ENCODE measurements at regions of chr2 and their contacts with region 1.

Region 1: GRCh38 chr2:217785544-217786045 is 217.2 kb downstream of the TNS1 start:
- DNase-seq: peak; percentile 87
- ATAC-seq: peak; percentile 87
- H3K4me3 Mint-ChIP-seq: no peak overlapping the region
- H3K27ac Mint-ChIP-seq: no peak overlapping the region
- H3K4me1 Mint-ChIP-seq: peaks cover 13% of the 10 kb centered on the region
- H3K27me3 Mint-ChIP-seq: peaks cover 15% of the 10 kb centered on the region
- CTCF ChIP-seq: peak; percentile 97

Region 2: DNA sequence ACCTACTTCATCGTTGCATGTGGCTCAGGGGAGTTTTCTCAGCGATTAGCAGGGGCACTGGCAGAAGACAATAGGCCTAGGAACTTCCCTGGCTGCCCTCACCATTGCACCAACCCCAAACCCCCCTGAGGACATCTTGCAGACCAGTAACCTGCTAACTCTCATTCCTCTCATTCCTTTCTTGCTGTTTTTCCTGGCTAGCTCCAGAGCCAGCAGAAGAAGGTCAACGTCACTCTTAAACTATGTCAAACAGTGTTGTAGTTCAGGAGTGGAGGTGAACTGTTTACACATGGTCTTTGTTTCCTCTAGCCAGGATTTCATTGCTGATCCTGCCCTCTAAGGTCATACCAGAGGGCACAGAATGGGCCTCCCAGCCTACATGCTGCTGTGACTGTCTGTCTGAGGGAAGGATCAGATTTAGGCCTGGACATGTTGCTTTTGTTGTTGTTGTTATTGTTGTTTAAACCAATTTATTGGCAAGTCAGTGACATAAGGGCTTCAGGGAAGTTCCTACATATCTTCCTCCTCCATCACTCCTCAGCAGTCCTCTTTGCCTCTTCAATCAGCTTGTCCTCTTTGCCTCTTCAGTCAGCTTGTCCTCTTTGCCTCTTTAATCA is 454.0 kb before region 1 on chr2:
- CTCF ChIA-PET with region 1: no interaction called
- POLR2A ChIA-PET with region 1: no interaction called
- DNase-seq: no peak
- ATAC-seq: peak; percentile 70
- H3K4me3 Mint-ChIP-seq: no peak overlapping the region
- H3K27ac Mint-ChIP-seq: no peak overlapping the region
- H3K4me1 Mint-ChIP-seq: peaks cover 47% of the 10 kb centered on the region
- H3K27me3 Mint-ChIP-seq: peaks cover 30% of the 10 kb centered on the region
- CTCF ChIP-seq: no peak

Region 3: GRCh38 chr2:217732992-217733391 is 52.6 kb before region 1 on chr2:
- CTCF ChIA-PET with region 1: no interaction called
- POLR2A ChIA-PET with region 1: no interaction called
- DNase-seq: no peak
- ATAC-seq: no peak
- H3K4me3 Mint-ChIP-seq: no peak overlapping the region
- H3K27ac Mint-ChIP-seq: no peak overlapping the region
- H3K4me1 Mint-ChIP-seq: peaks cover 12% of the 10 kb centered on the region; the same call in 1 of the 2 replicates
- H3K27me3 Mint-ChIP-seq: no peaks in the 10 kb centered on the region
- CTCF ChIP-seq: no peak

Region 4: DNA sequence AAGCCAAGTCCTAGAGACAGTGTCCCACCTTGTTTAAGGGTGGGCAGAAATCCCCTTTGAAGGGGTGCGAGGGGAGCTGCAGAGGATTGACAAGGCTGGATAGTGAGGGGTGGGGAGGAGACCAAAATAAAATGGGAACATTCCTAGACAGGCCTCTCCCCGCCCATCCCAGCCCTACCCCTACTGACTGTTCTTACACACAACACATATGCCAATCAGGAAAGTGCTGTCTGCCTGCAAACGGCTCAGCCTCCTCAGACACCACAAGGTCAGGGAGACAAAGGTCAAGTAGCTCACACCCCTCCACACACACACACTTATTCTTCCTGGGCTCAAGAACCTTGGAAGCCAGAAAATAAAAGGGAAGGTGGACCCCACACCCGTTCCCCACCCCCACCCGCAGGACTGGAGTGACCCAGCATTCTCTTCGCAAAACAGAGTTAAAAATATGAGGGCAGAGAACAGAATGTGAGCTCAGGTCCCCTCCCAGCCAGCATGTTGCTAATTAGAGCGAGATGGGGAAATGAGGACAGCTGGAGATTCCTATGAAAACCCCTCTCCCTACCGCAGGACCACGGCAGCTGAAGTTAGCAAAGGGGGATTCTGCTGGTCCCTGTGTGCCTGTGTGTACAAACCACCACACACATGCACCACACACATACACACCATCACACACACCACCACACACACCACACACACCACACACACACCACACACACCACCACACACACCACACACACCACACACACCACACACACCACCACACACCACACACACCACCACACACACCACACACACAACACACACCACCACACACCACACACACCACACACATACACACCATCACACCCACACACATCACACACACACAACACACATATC is 19.4 kb after region 1 on chr2:
- CTCF ChIA-PET with region 1: interaction called, 17 read pairs
- POLR2A ChIA-PET with region 1: no interaction called
- DNase-seq: no peak
- ATAC-seq: peak; percentile 47
- H3K4me3 Mint-ChIP-seq: no peak overlapping the region
- H3K27ac Mint-ChIP-seq: no peak overlapping the region
- H3K4me1 Mint-ChIP-seq: peaks cover 3% of the 10 kb centered on the region
- H3K27me3 Mint-ChIP-seq: no peaks in the 10 kb centered on the region
- CTCF ChIP-seq: no peak

Region 5: GRCh38 chr2:217880287-217880889 is 94.8 kb after region 1 on chr2:
- CTCF ChIA-PET with region 1: interaction called, 83 read pairs
- POLR2A ChIA-PET with region 1: no interaction called
- DNase-seq: no peak
- ATAC-seq: no peak; the same call in 1 of the 2 replicates
- H3K4me3 Mint-ChIP-seq: no peak overlapping the region
- H3K27ac Mint-ChIP-seq: no peak overlapping the region; the same call in 1 of the 2 replicates
- H3K4me1 Mint-ChIP-seq: peaks cover 13% of the 10 kb centered on the region
- H3K27me3 Mint-ChIP-seq: no peaks in the 10 kb centered on the region
- CTCF ChIP-seq: no peak

Region 6: DNA sequence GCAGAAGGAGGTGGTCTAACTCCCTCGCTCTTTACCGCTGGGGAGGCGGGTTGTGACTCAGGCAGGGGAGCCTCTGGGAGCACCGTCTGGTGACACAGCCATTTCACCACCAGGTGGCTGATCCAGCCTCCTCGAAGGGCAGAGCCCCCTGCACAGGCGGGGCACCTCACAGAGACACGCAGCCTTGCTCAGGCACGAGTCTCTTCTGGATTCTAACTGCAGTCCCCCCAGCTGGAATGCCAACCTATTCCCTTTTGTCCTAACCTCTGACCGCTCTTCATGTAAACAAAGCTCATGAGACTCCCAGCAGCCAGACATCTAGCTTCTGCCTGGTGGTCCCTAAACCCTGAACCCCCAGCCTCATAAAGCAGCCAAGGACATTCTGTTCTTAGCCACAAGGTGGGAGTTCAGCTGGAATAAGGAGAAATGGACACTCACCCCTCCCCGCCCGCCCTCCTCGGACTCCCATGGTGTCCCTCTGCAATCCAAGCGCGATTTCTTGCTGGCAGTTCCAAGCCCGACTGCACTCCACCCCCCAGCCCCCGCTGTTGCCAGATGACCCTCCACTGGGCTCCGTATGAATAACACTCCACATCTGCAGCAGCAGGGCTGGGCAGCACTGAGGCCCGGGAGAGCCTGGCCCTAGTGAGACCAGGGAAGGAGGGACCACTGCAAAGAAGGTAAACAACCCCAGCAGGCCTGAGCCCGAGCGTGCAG is 132.9 kb after region 1 on chr2:
- CTCF ChIA-PET with region 1: interaction called, 14 read pairs
- POLR2A ChIA-PET with region 1: no interaction called
- DNase-seq: peak; percentile 60
- ATAC-seq: peak; percentile 67
- H3K4me3 Mint-ChIP-seq: no peak overlapping the region
- H3K27ac Mint-ChIP-seq: no peak overlapping the region
- H3K4me1 Mint-ChIP-seq: peaks cover 55% of the 10 kb centered on the region
- H3K27me3 Mint-ChIP-seq: no peaks in the 10 kb centered on the region
- CTCF ChIP-seq: no peak

Region 7: DNA sequence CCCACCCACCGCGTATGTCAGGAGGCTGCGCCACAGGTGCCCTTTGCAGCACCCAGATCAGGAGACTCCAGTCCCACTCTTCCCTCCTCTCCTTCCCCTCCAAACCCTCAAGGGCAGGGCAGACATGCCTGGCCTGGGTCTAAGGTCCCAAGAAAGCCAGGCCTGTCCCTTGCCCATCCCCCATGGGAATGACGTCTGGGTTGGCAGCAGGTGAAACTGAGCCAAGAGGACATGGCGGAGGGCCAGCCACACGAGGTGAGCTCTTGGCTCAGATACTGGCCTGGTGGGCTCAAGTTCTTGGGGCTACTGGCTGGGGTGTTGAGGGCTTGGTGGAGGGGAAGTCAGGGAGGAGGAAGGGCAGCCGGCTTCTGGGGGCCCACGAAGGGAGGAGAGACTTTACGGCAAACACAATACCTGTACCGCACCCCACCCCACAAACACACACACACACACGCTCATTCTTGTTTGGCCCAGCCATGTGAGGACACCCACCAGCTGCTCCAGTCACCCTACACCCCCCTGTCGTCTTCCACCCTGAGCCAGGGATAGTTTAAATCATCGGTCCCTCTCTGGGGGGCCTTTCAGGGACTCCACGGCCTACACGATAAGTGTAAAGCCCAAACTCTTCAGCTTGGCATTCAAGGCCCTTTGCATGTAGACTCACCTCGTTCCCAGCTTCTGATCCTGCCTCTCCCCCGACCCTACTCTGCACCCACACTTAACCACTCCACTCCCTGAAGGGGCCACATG is 241.3 kb after region 1 on chr2:
- CTCF ChIA-PET with region 1: interaction called, 12 read pairs
- POLR2A ChIA-PET with region 1: no interaction called
- DNase-seq: peak; percentile 8
- ATAC-seq: no peak
- H3K4me3 Mint-ChIP-seq: no peak overlapping the region
- H3K27ac Mint-ChIP-seq: no peak overlapping the region
- H3K4me1 Mint-ChIP-seq: peaks cover 17% of the 10 kb centered on the region
- H3K27me3 Mint-ChIP-seq: peaks cover 2% of the 10 kb centered on the region; the same call in 1 of the 2 replicates
- CTCF ChIP-seq: no peak